Cardiac septum (tissue), 1 donor: ENCODE measurements at regions of chr10 and their contacts with region 1.

Region 1: DNA sequence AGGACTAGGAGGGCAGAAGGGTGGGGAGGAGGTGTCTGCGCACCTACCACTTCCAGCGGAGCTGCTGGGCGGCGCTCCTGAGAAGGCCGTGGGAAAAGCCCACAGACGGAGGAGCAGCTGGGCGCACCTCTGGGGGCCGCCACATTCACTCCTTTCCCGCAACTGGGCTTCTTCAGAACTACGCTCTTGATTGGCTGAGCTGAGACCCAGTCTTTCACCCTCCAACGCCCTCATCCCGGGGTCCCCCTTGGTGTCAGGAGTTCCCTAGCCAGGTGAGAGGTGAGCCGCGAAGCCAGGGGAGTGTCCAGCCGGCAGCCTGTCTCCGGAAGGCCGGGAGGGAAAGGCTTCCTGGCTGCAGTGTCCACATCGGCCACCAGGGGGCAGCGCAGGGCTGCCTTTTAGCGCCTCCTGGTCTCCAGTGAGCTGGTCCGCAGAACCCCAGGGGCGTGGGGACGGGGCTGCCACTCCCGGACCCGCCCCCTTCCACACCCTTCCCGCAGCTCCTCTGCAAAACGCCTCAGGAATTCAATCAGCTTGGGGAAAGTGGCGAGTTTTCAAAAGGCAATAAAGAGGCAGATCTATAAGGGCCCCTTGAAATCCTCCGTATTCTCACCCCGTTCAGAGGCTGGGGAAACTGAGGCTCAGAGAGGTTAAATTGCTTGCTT is 98.8 kb downstream of the CHST15 start:
- DNase-seq: peak; percentile 94

Region 2: GRCh38 chr10:124116771-124117510 is 122.4 kb after region 1 on chr10:
- intact Hi-C with region 1: no loop called
- DNase-seq: no peak

Region 3: GRCh38 chr10:124262234-124262865 is 267.8 kb after region 1 on chr10:
- intact Hi-C with region 1: loop called (anchors 5 kb)
- DNase-seq: peak; percentile 71

Region 4: DNA sequence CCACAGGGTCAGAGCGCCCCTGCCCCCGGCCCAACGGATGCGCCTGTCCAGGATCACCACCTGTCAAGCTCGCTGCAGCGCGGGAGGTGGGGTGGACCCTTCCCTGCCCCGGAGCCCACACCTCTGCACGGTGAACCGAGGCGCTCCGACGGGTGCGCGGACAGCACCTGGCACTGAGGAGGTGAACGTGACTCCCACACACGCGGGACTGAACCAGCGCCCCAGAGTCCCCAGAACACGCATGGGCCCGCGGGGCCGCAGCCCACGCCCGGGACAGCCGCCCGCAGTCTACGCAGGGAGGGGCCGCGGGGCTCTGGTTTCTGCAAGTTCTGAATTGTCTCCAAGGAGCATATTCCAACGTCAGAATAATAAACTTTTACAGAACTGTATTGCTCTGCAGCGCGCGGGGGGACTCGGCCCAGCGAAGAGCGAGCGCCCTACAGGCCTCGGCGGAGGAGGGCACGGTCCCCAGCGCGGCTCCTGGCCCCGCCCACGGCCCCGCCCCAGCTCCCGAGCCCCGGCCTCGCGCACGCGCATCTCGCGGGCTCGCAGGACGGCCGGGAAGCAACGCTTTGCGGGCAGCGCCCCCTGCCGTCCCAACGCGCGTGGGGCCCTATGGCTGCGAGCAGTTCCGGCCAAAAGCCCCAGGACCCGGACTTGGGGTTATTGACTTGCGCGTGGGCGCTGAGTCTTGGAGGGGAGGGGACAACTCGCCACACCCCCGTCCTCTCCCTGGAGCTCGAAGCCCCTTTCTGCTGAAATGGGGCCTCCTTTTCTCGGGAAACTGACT is 394.5 kb after region 1 on chr10:
- intact Hi-C with region 1: loop called (anchors 1 kb)
- DNase-seq: peak; percentile 96